K562 (cell line): ENCODE measurements at regions of chr20 and their contacts with region 1.

Region 1: DNA sequence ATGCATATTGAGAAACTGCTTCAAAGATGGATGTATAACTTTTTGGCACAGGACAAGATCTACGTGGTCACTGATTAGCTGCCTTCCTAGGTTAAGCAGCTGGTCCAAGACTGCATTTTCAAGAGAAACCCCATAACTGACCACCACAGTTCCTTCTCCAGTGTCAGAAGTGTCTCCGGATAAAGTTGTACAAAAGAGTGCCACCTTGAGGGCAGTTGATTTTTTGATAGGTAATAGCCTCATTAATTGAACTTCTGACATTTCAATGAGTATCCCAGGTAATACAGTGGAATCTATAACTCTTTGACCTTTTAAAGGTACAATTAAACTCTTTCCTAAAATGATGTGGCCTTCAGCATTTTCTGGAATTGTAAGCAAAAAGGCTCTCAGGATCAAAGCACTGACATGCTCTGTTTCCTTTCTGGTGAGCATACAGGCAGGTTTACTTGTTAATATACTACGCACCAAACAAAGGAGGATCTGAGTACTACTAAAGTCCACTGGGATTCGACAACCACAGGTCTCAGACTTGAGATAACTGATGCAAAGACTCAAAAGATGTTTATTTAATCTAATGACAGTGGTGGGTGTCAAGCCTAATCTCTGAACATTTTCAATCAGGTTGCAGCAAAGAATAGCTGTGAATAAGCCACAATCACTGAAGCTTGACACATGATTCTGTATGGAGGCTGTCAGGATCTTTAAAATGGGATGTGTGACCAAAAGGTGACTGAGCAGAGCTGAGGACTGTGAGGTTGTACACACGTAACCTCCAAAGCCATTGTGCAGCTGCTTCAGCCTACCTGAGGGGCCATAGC is 21.2 kb downstream of the MKKS start:
- DNase-seq: no peak
- ATAC-seq: no peak
- H3K4me3 ChIP-seq: no peak overlapping the region
- H3K27ac ChIP-seq: no peak overlapping the region
- H3K4me1 ChIP-seq: no peaks in the 10 kb centered on the region
- H3K27me3 ChIP-seq: no peaks in the 10 kb centered on the region
- CTCF ChIP-seq: peak in 1 of 3 experiments; percentile 7; a peak in 1 of 6 replicates
- EP300 ChIP-seq: no peak
- POLR2A ChIP-seq: no peak
- RAD21 ChIP-seq: no peak

Region 2: GRCh38 chr20:8602389-8603116 is 1810.2 kb before region 1 on chr20:
- CTCF ChIA-PET with region 1: no interaction called
- POLR2A ChIA-PET with region 1: no interaction called
- in situ Hi-C with region 1: loop called (anchors 25 kb)
- intact Hi-C with region 1: no loop called
- DNase-seq: no peak
- ATAC-seq: no peak
- H3K4me3 ChIP-seq: no peak overlapping the region
- H3K27ac ChIP-seq: no peak overlapping the region
- H3K4me1 ChIP-seq: no peaks in the 10 kb centered on the region
- H3K27me3 ChIP-seq: no peaks in the 10 kb centered on the region
- CTCF ChIP-seq: no peak
- EP300 ChIP-seq: no peak
- POLR2A ChIP-seq: no peak
- RAD21 ChIP-seq: no peak

Region 3: GRCh38 chr20:10469599-10469998 is 56.8 kb after region 1 on chr20:
- CTCF ChIA-PET with region 1: no interaction called
- POLR2A ChIA-PET with region 1: no interaction called
- in situ Hi-C with region 1: no loop called
- intact Hi-C with region 1: no loop called
- DNase-seq: peak in 3 of 4 experiments; percentile 10 to 64 (median 38)
- ATAC-seq: peak; percentile 85
- H3K4me3 ChIP-seq: no peak overlapping the region
- H3K27ac ChIP-seq: no peak overlapping the region
- H3K4me1 ChIP-seq: peaks cover 0 to 6% of the 10 kb centered on the region in 2 experiments; a peak in 1 of 5 replicates
- H3K27me3 ChIP-seq: no peaks in the 10 kb centered on the region
- CTCF ChIP-seq: peak; percentile 19 to 57 (median 41); a peak in 3 of 6 replicates
- EP300 ChIP-seq: no peak
- POLR2A ChIP-seq: no peak
- RAD21 ChIP-seq: peak; percentile 63 to 69